H1 (cell line): ENCODE measurements at regions of chr3 and their contacts with region 1.

Region 1: GRCh38 chr3:123723522-123724168 is 138.8 kb upstream of the HACD2 start:
- DNase-seq: peak; percentile 51 to 76
- H3K4me3 ChIP-seq: no peak overlapping the region
- H3K27ac ChIP-seq: no peak overlapping the region
- H3K4me1 ChIP-seq: peaks cover 0 to 3% (median 0%) of the 10 kb centered on the region in 4 experiments; a peak in 1 of 7 replicates
- H3K27me3 ChIP-seq: no peaks in the 10 kb centered on the region
- CTCF ChIP-seq: peak; percentile 54 to 93 (median 83)
- EP300 ChIP-seq: no peak
- POLR2A ChIP-seq: no peak; a peak in 1 of 3 replicates
- RAD21 ChIP-seq: peak; percentile 58 to 72

Region 2: GRCh38 chr3:123421353-123422174 is 302.1 kb before region 1 on chr3:
- CTCF ChIA-PET with region 1: no interaction called
- POLR2A ChIA-PET with region 1: no interaction called
- DNase-seq: no peak
- H3K4me3 ChIP-seq: no peak overlapping the region
- H3K27ac ChIP-seq: no peak overlapping the region
- H3K4me1 ChIP-seq: no peaks in the 10 kb centered on the region; a peak in 2 of 7 replicates
- H3K27me3 ChIP-seq: no peaks in the 10 kb centered on the region
- CTCF ChIP-seq: no peak
- EP300 ChIP-seq: no peak
- POLR2A ChIP-seq: no peak
- RAD21 ChIP-seq: no peak

Region 3: GRCh38 chr3:123658118-123658851 is 65.4 kb before region 1 on chr3:
- CTCF ChIA-PET with region 1: interaction called, 1,463 read pairs
- POLR2A ChIA-PET with region 1: no interaction called
- DNase-seq: no peak
- H3K4me3 ChIP-seq: no peak overlapping the region
- H3K27ac ChIP-seq: no peak overlapping the region
- H3K4me1 ChIP-seq: no peaks in the 10 kb centered on the region
- H3K27me3 ChIP-seq: no peaks in the 10 kb centered on the region
- CTCF ChIP-seq: no peak
- EP300 ChIP-seq: no peak
- POLR2A ChIP-seq: no peak
- RAD21 ChIP-seq: no peak

Region 4: GRCh38 chr3:123679712-123680386 is 43.8 kb before region 1 on chr3:
- CTCF ChIA-PET with region 1: interaction called, 14 read pairs
- POLR2A ChIA-PET with region 1: no interaction called
- DNase-seq: no peak
- H3K4me3 ChIP-seq: no peak overlapping the region
- H3K27ac ChIP-seq: no peak overlapping the region
- H3K4me1 ChIP-seq: peaks cover 0 to 7% (median 1%) of the 10 kb centered on the region in 4 experiments; a peak in 1 of 7 replicates
- H3K27me3 ChIP-seq: no peaks in the 10 kb centered on the region
- CTCF ChIP-seq: no peak
- EP300 ChIP-seq: no peak
- POLR2A ChIP-seq: no peak
- RAD21 ChIP-seq: no peak

Region 5: DNA sequence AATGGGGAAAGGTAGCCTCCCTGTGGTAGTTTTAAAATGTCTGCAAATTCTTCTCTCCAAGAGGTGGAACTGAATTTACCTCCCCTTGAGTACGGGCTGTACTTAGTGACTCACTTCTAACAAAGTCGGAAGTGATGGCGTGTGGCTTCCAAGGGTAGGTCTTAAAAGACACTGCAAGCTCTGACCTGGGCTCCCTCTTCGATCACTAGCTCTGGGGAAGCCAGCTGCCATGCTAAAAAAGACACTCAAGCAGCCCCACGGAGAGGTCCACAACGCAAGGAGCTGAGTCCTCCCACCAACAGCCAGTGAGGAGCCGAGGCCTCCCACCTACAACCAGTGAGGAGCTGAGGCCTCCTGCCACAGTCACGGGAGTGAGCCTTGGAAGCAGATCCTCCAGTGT is 16.8 kb before region 1 on chr3:
- CTCF ChIA-PET with region 1: interaction called, 34 read pairs
- POLR2A ChIA-PET with region 1: interaction called, 3 read pairs
- DNase-seq: no peak
- H3K4me3 ChIP-seq: no peak overlapping the region
- H3K27ac ChIP-seq: no peak overlapping the region
- H3K4me1 ChIP-seq: peaks cover 0 to under 1% (median under 1%) of the 10 kb centered on the region in 4 experiments; a peak in 2 of 7 replicates
- H3K27me3 ChIP-seq: no peaks in the 10 kb centered on the region
- CTCF ChIP-seq: no peak
- EP300 ChIP-seq: no peak
- POLR2A ChIP-seq: no peak
- RAD21 ChIP-seq: no peak

Region 6: GRCh38 chr3:123745184-123745855 is 21.7 kb after region 1 on chr3:
- CTCF ChIA-PET with region 1: interaction called, 25 read pairs
- POLR2A ChIA-PET with region 1: interaction called, 3 read pairs
- DNase-seq: no peak
- H3K4me3 ChIP-seq: no peak overlapping the region
- H3K27ac ChIP-seq: no peak overlapping the region
- H3K4me1 ChIP-seq: no peaks in the 10 kb centered on the region
- H3K27me3 ChIP-seq: no peaks in the 10 kb centered on the region
- CTCF ChIP-seq: peak; percentile 20 to 47 (median 46)
- EP300 ChIP-seq: no peak
- POLR2A ChIP-seq: no peak
- RAD21 ChIP-seq: peak; percentile 51 to 65